Common myeloid progenitor, CD34-positive (primary cell): ENCODE measurements at regions of chr1 and their contacts with region 1.

Region 1: DNA sequence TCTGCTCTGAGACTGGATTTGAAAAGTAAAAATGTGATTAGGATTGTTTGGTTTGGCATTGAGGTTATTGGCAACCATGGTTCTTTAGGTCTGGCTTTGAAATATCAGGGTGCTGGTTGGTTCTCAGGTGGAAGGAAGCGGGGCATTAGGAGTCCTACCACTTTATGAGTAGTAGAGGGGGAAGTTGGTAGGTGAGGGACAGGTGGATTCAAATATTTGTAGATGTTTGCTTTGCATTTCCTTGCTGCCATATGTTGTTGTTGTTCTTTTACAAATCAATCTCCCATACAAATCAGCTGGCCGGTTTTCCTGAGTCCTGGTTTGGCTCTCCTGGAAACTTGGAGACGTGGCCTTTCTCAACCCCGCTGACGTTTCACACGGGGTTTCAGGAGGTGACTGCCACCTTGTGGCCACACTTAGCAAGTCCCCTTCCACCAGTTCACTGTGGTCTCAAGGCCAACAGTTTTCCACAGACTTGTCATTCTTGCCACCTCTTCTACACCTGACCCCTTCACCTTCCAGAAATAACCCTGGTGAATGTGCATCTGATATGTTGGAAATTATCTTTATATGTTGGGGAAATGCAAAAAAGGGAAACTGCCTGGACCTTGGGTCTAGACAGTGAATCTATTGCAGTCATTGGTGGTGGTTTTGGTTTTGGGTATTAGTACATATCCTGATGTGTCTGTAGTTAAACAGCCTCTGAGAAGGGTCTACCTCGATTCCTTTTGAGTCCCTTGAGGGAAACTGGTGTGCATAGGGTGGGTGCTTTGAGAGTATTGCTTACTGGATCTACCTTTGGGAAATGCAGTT is 127.0 kb upstream of the KIAA0040 start:
- DNase-seq: peak; percentile 60 to 80 (median 72)
- H3K4me3 ChIP-seq: peak overlapping the region in 1 of 7 experiments; percentile 7
- H3K27ac ChIP-seq: no peak overlapping the region
- H3K4me1 ChIP-seq: peaks cover 0 to 4% (median 1%) of the 10 kb centered on the region in 4 experiments
- H3K27me3 ChIP-seq: peaks cover 0 to 5% (median 0%) of the 10 kb centered on the region in 5 experiments

Region 2: DNA sequence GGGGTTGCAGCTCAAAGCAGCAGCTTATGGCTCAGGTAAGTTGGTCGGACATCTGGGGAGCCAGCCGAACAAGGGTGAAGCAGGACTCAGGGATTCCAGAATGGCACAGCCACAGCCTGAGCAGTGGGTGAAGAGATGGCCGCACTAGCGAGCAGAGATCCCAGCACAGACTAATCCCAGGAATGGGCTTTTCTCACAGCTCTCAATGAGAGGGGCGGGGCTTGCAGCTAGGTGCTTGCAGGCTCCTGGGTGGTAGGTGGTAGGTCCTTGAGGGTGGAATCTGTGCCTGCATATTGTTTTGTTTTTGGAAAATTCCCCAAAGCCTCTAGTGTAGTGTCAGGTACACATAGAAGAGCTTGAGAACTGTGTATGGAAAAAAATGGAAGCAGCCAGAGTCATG is 136.0 kb before region 1 on chr1:
- CTCF ChIA-PET with region 1: interaction called, 11 read pairs
- POLR2A ChIA-PET with region 1: no interaction called
- DNase-seq: no peak
- H3K4me3 ChIP-seq: no peak overlapping the region
- H3K27ac ChIP-seq: no peak overlapping the region
- H3K4me1 ChIP-seq: peaks cover 7 to 21% (median 12%) of the 10 kb centered on the region in 4 experiments
- H3K27me3 ChIP-seq: no peaks in the 10 kb centered on the region

Region 3: GRCh38 chr1:175338387-175339135 is 18.9 kb after region 1 on chr1:
- CTCF ChIA-PET with region 1: interaction called, 17 read pairs
- POLR2A ChIA-PET with region 1: no interaction called
- DNase-seq: peak; percentile 18 to 57 (median 51)
- H3K4me3 ChIP-seq: no peak overlapping the region
- H3K27ac ChIP-seq: no peak overlapping the region
- H3K4me1 ChIP-seq: no peaks in the 10 kb centered on the region
- H3K27me3 ChIP-seq: peaks cover 0 to 20% (median 5%) of the 10 kb centered on the region in 5 experiments